IMR-90 (cell line): ENCODE measurements at regions of chr11 and their contacts with region 1.

Region 1: GRCh38 chr11:43341159-43341558 is 17.6 kb upstream of the TTC17 start:
- DNase-seq: no peak
- ATAC-seq: no peak
- H3K4me3 ChIP-seq: no peak overlapping the region
- H3K27ac ChIP-seq: no peak overlapping the region
- H3K4me1 ChIP-seq: no peaks in the 10 kb centered on the region
- H3K27me3 ChIP-seq: no peaks in the 10 kb centered on the region
- CTCF ChIP-seq: no peak
- POLR2A ChIP-seq: no peak
- RAD21 ChIP-seq: no peak

Region 2: GRCh38 chr11:43410394-43410793 is 69.2 kb after region 1 on chr11:
- CTCF ChIA-PET with region 1: no interaction called
- POLR2A ChIA-PET with region 1: no interaction called
- dilution Hi-C with region 1: no loop called
- in situ Hi-C with region 1: loop called (anchors 5 kb)
- intact Hi-C with region 1: no loop called
- DNase-seq: no peak
- ATAC-seq: no peak
- H3K4me3 ChIP-seq: no peak overlapping the region
- H3K27ac ChIP-seq: no peak overlapping the region
- H3K4me1 ChIP-seq: no peaks in the 10 kb centered on the region
- H3K27me3 ChIP-seq: no peaks in the 10 kb centered on the region
- CTCF ChIP-seq: no peak
- POLR2A ChIP-seq: no peak
- RAD21 ChIP-seq: no peak